MCF 10A (cell line): ENCODE measurements at regions of chr18 and their contacts with region 1.

Region 1: GRCh38 chr18:9147440-9148202 is 11.0 kb downstream of the ANKRD12 start:
- DNase-seq: peak; percentile 79
- H3K4me3 Mint-ChIP-seq: no peak overlapping the region
- H3K27ac Mint-ChIP-seq: peak overlapping the region; percentile 66
- H3K4me1 Mint-ChIP-seq: peaks cover 29% of the 10 kb centered on the region
- H3K27me3 Mint-ChIP-seq: no peaks in the 10 kb centered on the region
- CTCF ChIP-seq: peak; percentile 66

Region 2: DNA sequence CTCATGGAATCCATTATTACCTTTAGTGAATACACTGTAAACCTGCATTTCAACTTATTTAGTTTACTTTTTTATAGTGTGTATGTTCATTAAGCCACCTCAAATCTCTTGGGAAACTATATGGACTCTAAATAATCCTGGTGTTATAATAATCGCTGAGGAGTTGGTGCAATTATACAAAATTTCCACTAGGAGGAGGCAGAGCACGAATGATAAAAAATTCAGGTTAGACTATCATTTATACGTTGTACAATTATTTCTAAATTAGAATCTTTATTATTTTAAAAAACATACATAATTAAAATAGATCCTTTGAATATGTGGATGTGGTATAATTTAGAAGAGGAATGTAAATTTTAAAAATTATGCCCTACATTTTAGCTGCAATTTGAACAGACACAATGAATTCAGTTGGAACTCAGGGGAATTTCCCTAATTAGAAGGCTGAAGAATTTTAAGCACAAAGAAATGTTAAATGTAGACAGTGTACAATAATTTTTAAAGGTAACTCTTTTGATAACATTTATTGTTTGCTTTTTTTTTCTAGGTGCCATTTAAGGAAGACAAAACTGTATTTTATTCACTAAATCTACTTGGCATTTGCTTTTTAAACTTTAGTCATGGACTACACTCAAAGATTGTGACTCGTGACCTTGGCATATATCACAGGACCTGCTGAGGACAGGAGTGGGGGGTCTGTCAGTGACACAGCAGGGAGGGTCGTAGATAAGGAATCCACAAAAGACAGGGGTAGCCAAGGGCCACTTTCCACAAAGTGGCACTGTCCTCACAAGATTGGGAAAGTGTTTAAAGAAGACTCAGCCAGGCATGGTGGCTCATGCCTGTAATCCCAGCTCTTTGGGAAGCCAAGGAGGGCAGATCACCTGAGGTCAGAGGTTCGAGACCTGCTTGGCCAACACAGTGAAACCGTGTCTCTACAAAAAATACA is 492.8 kb before region 1 on chr18:
- CTCF ChIA-PET with region 1: interaction called, 5 read pairs
- POLR2A ChIA-PET with region 1: no interaction called
- intact Hi-C with region 1: loop called (anchors 5 kb)
- DNase-seq: peak; percentile 40
- H3K4me3 Mint-ChIP-seq: no peak overlapping the region
- H3K27ac Mint-ChIP-seq: no peak overlapping the region
- H3K4me1 Mint-ChIP-seq: peaks cover 10% of the 10 kb centered on the region
- H3K27me3 Mint-ChIP-seq: peaks cover 14% of the 10 kb centered on the region
- CTCF ChIP-seq: peak; percentile 71

Region 3: GRCh38 chr18:8696749-8697211 is 450.8 kb before region 1 on chr18:
- CTCF ChIA-PET with region 1: no interaction called
- POLR2A ChIA-PET with region 1: no interaction called
- intact Hi-C with region 1: loop called (anchors 5 kb)
- DNase-seq: peak; percentile 63
- H3K4me3 Mint-ChIP-seq: no peak overlapping the region
- H3K27ac Mint-ChIP-seq: no peak overlapping the region
- H3K4me1 Mint-ChIP-seq: peaks cover 4% of the 10 kb centered on the region
- H3K27me3 Mint-ChIP-seq: no peaks in the 10 kb centered on the region
- CTCF ChIP-seq: peak; percentile 61

Region 4: DNA sequence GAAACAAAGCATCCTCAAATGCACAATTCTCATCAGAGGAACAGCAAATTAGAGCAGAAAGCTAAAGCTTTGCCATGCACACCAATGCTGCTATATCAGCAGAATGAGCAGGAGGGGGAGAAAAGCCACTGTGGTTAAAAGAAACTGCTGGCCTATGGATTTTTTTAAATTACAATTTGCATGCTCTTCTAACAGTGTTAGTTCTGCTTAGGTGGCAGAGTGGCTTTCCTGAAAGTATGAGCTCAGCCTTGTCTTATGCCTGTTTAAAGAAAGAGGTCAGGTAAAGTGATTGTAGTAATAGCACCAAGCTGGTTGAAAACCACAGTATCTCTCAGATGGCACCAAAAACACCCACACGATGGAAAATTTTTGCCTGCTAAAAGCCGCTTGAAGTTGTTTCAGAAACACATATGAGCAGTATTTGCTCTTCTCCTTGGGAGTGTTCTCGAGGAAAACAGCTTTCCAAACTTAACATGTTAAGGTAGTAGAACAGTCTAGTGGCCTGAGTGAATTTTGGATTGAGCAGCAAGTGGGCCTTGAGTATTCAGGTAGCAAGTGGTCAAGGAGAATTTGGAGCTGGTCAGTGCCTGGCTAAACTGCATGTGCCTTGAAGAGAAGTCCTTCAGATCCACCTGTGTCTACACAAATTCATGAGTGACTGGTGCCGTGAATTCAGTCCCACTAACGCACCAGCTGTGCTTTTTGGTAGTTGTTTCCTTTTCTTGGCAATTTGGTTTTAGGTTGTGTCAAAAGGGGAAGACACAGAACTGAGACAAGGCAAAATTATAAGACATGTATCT is 64.7 kb before region 1 on chr18:
- CTCF ChIA-PET with region 1: no interaction called
- POLR2A ChIA-PET with region 1: no interaction called
- intact Hi-C with region 1: no loop called
- DNase-seq: no peak
- H3K4me3 Mint-ChIP-seq: no peak overlapping the region
- H3K27ac Mint-ChIP-seq: no peak overlapping the region
- H3K4me1 Mint-ChIP-seq: no peaks in the 10 kb centered on the region
- H3K27me3 Mint-ChIP-seq: no peaks in the 10 kb centered on the region
- CTCF ChIP-seq: no peak

Region 5: DNA sequence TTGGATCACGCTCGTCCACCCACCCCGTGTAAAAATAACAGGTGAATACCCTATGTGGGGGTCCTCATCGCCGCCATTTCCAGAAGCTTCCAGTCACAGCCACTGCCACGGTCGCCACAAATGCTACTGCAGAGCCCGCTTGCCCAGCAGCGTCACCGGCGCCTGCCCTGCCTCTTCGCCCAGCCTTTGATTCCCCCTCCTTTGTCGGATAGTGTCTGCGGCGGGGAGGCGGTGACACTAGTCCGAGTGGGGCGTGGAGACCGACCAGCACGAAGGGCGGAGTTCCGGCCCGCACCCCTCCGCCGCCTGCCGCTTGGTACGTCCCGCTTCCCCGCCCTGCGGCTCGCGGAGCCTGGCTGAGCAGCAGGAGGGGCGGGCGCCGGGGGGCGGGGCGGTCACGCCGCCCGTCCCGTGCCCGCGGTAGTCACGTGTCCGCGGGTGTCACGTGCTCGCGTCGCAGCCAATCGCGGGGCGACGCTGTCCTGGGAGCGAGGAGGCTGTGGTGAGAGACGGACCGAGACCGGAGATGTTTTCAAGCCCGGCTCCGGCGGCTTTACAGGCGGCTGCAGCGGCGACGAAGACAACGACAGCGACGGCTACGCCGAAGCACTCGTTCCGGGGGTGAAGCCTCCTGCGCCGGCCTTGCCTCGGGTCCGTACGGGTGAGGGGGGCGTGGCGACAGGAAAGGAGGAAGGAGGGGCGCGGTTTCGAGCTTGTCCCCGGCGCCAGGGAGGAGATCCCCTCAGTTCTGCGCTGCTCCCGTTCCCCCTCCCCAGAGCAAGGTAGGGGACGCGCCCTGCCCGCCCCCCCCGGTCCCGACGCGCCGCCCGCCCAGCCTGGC is 11.1 kb before region 1 on chr18 and contains the start of gene ANKRD12:
- CTCF ChIA-PET with region 1: interaction called, 4 read pairs
- POLR2A ChIA-PET with region 1: interaction called, 62 read pairs
- intact Hi-C with region 1: no loop called
- DNase-seq: peak; percentile 95
- H3K4me3 Mint-ChIP-seq: peak within 1 kb of the TSS; percentile 90
- H3K27ac Mint-ChIP-seq: peak within 1 kb of the TSS; percentile 94
- H3K4me1 Mint-ChIP-seq: peaks cover 32% of the 10 kb centered on the region
- H3K27me3 Mint-ChIP-seq: no peaks in the 10 kb centered on the region
- CTCF ChIP-seq: no peak
- total RNA-seq, gene ANKRD12: 25.3 and 36.7 TPM in 2 replicates

Region 6: GRCh38 chr18:9474983-9475642 is 327.5 kb after region 1 on chr18 and contains the start of gene RALBP1:
- CTCF ChIA-PET with region 1: no interaction called
- POLR2A ChIA-PET with region 1: no interaction called
- intact Hi-C with region 1: loop called (anchors 5 kb)
- DNase-seq: peak; percentile 99
- H3K4me3 Mint-ChIP-seq: peak within 1 kb of the TSS; percentile 92
- H3K27ac Mint-ChIP-seq: peak within 1 kb of the TSS; percentile 97
- H3K4me1 Mint-ChIP-seq: peaks cover 29% of the 10 kb centered on the region
- H3K27me3 Mint-ChIP-seq: no peaks in the 10 kb centered on the region
- CTCF ChIP-seq: no peak
- total RNA-seq, gene RALBP1: 47.0 and 47.9 TPM in 2 replicates

Region 7: DNA sequence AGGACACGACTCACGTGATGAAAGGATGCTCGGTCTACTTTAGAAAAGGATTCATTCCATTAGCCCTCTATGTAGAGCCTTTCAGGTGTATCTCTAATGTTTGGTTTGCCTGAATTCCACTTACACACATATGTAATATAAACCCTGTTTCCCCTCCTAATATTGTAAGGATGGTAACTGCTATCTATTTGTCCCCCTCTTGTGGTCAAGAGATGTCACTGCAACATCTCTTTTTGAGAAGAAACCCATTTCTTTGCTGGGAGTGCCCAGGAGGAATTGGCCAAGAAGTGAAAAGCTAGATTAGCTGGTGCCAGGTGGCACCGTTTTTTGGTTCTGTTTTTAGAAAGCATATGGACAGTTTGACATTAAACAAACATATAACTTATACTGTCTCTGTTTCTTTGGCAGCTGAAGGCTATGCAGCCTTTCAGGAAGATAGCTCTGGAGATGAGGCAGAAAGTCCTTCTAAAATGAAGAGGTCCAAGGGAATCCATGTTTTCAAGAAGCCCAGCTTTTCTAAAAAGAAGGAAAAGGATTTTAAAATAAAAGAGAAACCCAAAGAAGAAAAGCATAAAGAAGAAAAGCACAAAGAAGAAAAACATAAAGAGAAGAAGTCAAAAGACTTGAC is 368.9 kb after region 1 on chr18:
- CTCF ChIA-PET with region 1: interaction called, 7 read pairs
- POLR2A ChIA-PET with region 1: no interaction called
- intact Hi-C with region 1: loop called (anchors 5 kb)
- DNase-seq: peak; percentile 52
- H3K4me3 Mint-ChIP-seq: no peak overlapping the region
- H3K27ac Mint-ChIP-seq: no peak overlapping the region
- H3K4me1 Mint-ChIP-seq: peaks cover 8% of the 10 kb centered on the region
- H3K27me3 Mint-ChIP-seq: no peaks in the 10 kb centered on the region
- CTCF ChIP-seq: peak; percentile 88